ENCODE measurements at regions of chr12 and their contacts with region 1.

Region 1: DNA sequence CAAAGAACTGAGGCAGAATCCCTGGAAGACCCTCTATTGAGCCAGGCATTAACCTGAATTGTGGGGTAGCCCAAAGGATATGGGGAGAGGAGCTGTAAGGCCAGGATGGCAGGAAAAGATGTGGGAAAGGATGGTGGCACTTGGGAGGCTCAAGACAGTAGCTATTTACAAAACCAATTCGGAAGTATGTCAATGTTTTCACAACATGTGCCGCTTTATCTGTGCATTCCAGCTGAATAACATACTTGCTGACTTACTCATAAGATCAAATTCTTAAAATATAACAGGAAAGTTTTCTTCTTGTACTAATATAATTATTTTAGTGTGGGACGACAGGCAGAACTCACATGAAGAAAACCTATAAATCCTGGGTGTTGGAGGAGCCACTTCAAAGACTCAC is 10.6 kb downstream of the BBS10 start:
- DNase-seq: no peak
- H3K4me3 Mint-ChIP-seq: no peak overlapping the region
- H3K27ac Mint-ChIP-seq: no peak overlapping the region
- H3K4me1 Mint-ChIP-seq: peaks cover 53% of the 10 kb centered on the region
- H3K27me3 Mint-ChIP-seq: no peaks in the 10 kb centered on the region
- CTCF ChIP-seq: no peak

Region 2: DNA sequence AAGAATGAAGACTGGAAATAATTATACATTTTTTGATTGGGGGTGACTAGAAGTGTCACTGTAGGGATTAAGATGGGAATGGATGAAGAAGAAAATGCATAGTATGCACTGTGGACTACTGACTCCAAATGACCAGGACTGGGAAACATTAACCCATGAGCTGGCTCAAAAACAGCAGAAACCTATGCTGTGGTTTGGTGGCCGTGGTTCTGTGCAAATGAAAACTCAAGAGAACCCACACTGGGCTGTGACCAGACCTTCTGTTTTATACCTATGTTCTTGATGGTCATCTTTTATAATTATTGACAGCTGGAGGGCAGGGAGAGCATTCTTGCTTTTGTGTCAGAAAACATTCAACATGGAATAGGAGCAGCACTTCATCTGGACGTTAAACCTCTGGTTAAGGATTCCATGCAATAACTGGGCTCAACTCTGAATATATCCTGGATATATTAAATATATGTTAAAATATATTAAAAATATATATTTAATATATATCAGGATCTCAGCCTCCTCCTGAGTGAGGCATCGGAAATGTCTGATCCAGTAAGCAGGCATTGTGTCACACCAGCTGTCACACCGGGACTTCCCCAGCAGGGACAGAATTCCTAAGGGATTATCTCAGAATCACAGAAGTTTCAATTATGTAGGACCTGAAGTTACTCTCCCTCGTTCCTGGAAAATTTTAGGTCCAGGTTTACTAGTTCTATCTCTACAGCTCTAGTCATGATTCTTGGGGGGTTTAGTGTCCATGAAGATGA is 37.9 kb before region 1 on chr12:
- CTCF ChIA-PET with region 1: no interaction called
- intact Hi-C with region 1: loop called (anchors 1 kb)
- DNase-seq: no peak
- H3K4me3 Mint-ChIP-seq: no peak overlapping the region
- H3K27ac Mint-ChIP-seq: no peak overlapping the region
- H3K4me1 Mint-ChIP-seq: peaks cover 9% of the 10 kb centered on the region
- H3K27me3 Mint-ChIP-seq: no peaks in the 10 kb centered on the region
- CTCF ChIP-seq: no peak

Region 3: DNA sequence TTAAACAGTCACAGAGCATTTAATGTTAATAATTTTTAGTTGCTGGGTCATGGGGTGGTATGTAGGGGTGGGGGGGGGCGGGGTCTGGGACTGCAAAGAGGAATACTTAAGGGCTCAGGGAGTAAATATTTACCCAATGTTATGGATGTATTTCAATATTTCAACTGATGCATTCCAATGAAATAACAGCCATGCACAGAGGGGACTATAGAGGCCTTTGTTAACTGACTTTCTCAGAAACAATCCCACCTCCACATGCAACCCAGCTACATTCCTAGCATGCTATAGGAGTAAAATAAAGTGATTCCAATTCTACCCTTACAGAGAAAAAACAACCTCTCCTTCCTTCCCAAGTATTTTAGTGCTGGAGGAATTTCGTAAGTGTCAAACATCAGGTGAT is 18.5 kb after region 1 on chr12:
- CTCF ChIA-PET with region 1: no interaction called
- intact Hi-C with region 1: no loop called
- DNase-seq: peak; percentile 47
- H3K4me3 Mint-ChIP-seq: peak overlapping the region; percentile 33
- H3K27ac Mint-ChIP-seq: peak overlapping the region; percentile 48
- H3K4me1 Mint-ChIP-seq: peaks cover 27% of the 10 kb centered on the region
- H3K27me3 Mint-ChIP-seq: no peaks in the 10 kb centered on the region
- CTCF ChIP-seq: no peak